ENCODE measurements at regions of chr11 and their contacts with region 1.

Region 1: GRCh38 chr11:109911488-109911887 is 181.7 kb upstream of the ZC3H12C start:
- DNase-seq: no peak
- ATAC-seq: no peak
- H3K4me3 ChIP-seq: no peak overlapping the region
- H3K27ac ChIP-seq: no peak overlapping the region
- H3K4me1 ChIP-seq: peaks cover 0 to 2% of the 10 kb centered on the region in 2 experiments; a peak in 1 of 5 replicates
- H3K27me3 ChIP-seq: no peaks in the 10 kb centered on the region
- CTCF ChIP-seq: no peak
- EP300 ChIP-seq: no peak
- POLR2A ChIP-seq: no peak
- RAD21 ChIP-seq: no peak

Region 2: DNA sequence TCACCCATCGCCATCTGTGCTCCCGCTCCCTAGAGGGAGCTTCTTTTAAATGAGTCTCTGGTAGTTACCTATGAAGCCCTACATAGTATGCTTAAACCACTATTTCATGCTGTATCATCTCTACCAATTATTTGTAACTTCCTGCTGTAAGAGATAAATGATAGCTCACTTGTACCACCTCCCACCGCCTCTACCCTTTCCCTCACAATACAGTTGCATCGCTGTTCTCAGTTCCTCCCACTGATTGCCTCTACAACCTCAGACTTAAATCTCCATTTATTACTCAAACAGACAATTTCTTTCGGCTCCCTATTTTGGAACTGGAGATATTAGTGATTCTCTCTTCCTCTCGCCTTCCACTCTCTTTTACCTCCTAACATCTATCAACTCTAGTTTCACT is 41.2 kb before region 1 on chr11:
- CTCF ChIA-PET with region 1: no interaction called
- POLR2A ChIA-PET with region 1: no interaction called
- in situ Hi-C with region 1: no loop called
- intact Hi-C with region 1: loop called (anchors 5 kb)
- DNase-seq: no peak
- ATAC-seq: no peak
- H3K4me3 ChIP-seq: no peak overlapping the region
- H3K27ac ChIP-seq: no peak overlapping the region
- H3K4me1 ChIP-seq: no peaks in the 10 kb centered on the region
- H3K27me3 ChIP-seq: no peaks in the 10 kb centered on the region
- CTCF ChIP-seq: no peak
- EP300 ChIP-seq: no peak
- POLR2A ChIP-seq: no peak
- RAD21 ChIP-seq: no peak

Measured in K562 (cell line).